ENCODE measurements at regions of chr7 and their contacts with region 1.

Region 1: GRCh38 chr7:132557489-132558044 is 18.7 kb downstream of the PLXNA4 start:
- ATAC-seq: peak in 2 of 8 experiments; percentile 24 to 36
- H3K4me3 ChIP-seq: no peak overlapping the region
- H3K27ac ChIP-seq: no peak overlapping the region
- H3K4me1 ChIP-seq: no peaks in the 10 kb centered on the region

Region 2: DNA sequence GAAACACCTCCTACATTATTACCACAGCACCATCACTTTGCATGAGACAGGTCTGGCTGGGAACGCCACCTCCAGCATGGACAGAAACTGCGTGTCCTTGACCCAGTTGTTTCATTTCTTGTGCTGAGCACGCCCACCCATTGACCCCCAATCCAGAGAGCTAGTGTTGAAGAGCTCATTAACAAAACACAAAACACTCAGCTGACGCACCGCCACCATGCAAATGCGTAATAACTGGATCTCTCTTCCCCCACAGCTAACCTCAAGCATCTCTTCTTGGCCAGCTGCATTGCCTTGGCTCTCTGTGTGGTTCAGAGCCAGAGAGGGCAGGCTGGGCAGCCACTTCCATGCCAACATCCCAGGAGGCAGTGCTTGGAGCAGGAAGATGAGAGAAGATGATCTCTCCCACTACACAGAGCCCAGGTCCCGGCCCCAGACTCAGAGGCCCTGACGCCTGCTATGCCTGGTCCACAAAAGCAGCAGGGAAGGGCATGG is 154.8 kb before region 1 on chr7:
- in situ Hi-C with region 1: loop called in 1 of 9 experiments (anchors 25 kb)
- ATAC-seq: peak in 6 of 8 experiments; percentile 16 to 75 (median 53)
- H3K4me3 ChIP-seq: no peak overlapping the region
- H3K27ac ChIP-seq: no peak overlapping the region
- H3K4me1 ChIP-seq: peaks cover 8 to 33% of the 10 kb centered on the region in 2 donors

Region 3: DNA sequence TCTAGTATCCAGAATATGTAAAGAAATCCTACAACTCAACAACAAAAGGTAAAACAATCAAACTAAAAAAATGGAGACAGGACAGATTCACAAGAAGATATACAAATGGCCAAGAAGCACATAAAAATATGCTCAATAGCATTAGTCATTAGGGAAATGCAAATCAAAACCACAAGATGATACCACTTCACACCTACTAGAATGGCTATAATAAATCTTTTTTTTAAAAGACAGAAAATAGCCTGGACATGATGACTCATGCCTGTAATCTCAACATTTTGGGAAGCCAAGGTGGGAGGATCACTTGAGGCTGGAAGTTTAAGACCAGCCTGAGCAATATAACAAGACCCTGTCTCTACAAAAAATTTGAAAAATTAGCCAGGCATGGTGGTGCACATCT is 552.2 kb after region 1 on chr7:
- in situ Hi-C with region 1: no loop called
- ATAC-seq: peak in 2 of 8 experiments; percentile 46 to 56
- H3K4me3 ChIP-seq: no peak overlapping the region
- H3K27ac ChIP-seq: no peak overlapping the region
- H3K4me1 ChIP-seq: peaks cover 0 to 4% of the 10 kb centered on the region in 2 donors